Gastrocnemius medialis (tissue), 4 donors: ENCODE measurements at regions of chr4 and their contacts with region 1.

Region 1: DNA sequence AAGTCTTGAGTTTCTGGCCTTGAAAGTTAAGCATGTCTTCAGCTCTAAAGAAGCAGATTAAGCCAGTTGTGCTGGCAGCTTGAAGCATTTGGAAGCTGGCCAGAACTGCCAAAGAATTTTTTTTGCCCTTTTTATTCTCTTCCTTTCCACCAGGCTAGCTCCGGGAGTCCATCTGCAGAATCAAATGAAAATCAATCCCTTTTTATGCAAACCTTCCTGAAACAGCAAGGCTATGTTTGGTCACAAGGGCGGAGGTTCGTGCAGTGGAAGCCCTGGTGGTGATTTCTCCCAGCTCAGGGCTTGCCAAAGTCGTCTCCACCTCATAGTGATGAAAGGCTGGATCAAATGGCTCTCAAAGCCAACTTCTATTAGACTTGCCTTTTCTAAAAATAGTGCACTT is 21.6 kb upstream of the C4orf54 start:
- DNase-seq: peak; percentile 79 to 84
- ATAC-seq: peak; percentile 98 to 99
- H3K4me3 ChIP-seq: peak overlapping the region in 1 of 4 donors; percentile 14
- H3K27ac ChIP-seq: peak overlapping the region; percentile 81 to 90 (median 84)
- H3K4me1 ChIP-seq: peaks cover 8 to 21% of the 10 kb centered on the region in 2 donors
- H3K27me3 ChIP-seq: no peaks in the 10 kb centered on the region
- CTCF ChIP-seq: peak in 2 of 5 experiments; percentile 26 to 47
- POLR2A ChIP-seq: no peak

Region 2: DNA sequence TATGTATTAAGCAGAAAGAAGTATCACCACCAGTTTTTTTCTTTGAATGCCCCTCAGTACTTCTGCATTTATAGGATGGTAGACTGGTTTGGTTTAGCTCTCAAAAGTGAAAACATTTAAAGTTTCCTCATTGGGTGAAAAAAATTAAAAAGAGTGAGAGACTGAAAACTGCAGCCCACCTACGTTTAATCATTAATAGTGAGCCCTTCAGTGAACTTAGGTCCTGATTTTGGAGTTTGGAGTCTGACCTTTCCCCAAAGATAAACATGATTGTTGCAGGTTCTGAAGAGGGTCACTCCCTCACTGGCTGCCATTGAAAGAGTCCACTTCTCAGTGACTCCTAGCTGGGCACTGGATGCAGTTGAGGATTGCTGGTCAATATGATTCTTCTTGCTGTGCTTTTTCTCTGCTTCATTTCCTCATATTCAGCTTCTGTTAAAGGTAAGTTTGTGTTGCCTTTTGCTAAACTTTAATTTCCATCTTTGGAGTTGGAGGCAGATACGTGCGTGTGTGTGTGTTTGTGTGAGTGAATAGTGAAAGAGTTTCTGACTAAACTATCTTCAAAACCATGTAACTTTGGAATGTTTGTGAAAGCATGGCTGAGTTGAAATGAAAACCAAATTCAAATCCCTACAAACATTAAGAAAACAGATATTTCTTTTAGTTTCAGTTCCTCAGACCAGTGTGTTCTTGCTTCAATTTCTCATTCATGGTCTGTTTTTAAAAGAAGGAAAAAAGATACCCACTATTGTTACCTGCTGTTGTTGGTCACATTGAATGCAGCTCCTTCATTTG is 104.5 kb before region 1 on chr4 and contains the start of gene MTTP:
- in situ Hi-C with region 1: no loop called
- intact Hi-C with region 1: no loop called
- DNase-seq: no peak
- ATAC-seq: no peak
- H3K4me3 ChIP-seq: no peak within 1 kb of the TSS
- H3K27ac ChIP-seq: peak within 1 kb of the TSS in 3 of 4 donors; percentile 30 to 56 (median 45)
- H3K4me1 ChIP-seq: peaks cover 9 to 20% of the 10 kb centered on the region in 2 donors
- H3K27me3 ChIP-seq: no peaks in the 10 kb centered on the region
- CTCF ChIP-seq: no peak
- POLR2A ChIP-seq: no peak
- total RNA-seq, gene MTTP: 0.33 to 0.63 (median 0.59) TPM in 3 of 4 donors, not detected in the other

Region 3: DNA sequence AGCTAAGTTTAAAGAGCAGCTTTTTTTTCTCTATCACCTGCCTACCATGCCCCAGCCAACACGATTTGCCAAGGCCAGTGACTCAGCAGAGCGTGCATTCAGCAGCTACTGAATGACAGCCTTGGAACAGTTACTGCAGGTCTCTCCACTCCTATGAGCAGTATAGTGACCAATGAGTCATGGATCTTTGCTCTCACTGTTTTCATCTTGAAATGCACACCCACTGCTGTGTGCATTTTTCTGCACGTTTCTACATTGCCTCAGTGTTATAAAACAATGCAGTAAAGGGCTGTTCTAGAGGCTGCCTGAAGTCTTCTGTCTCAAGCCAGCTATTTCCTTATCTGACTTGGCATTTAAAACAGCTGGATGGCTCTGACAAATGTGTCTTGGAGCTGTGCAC is 44.4 kb after region 1 on chr4:
- in situ Hi-C with region 1: no loop called
- intact Hi-C with region 1: loop called (anchors 2 kb)
- DNase-seq: peak; percentile 83 to 94
- ATAC-seq: peak; percentile 97 to 98
- H3K4me3 ChIP-seq: no peak overlapping the region
- H3K27ac ChIP-seq: peak overlapping the region; percentile 89 to 95 (median 91)
- H3K4me1 ChIP-seq: peaks cover 38 to 48% of the 10 kb centered on the region in 2 donors
- H3K27me3 ChIP-seq: no peaks in the 10 kb centered on the region
- CTCF ChIP-seq: no peak
- POLR2A ChIP-seq: no peak